Mammary epithelial cell (primary cell): ENCODE measurements at regions of chr11 and their contacts with region 1.

Region 1: DNA sequence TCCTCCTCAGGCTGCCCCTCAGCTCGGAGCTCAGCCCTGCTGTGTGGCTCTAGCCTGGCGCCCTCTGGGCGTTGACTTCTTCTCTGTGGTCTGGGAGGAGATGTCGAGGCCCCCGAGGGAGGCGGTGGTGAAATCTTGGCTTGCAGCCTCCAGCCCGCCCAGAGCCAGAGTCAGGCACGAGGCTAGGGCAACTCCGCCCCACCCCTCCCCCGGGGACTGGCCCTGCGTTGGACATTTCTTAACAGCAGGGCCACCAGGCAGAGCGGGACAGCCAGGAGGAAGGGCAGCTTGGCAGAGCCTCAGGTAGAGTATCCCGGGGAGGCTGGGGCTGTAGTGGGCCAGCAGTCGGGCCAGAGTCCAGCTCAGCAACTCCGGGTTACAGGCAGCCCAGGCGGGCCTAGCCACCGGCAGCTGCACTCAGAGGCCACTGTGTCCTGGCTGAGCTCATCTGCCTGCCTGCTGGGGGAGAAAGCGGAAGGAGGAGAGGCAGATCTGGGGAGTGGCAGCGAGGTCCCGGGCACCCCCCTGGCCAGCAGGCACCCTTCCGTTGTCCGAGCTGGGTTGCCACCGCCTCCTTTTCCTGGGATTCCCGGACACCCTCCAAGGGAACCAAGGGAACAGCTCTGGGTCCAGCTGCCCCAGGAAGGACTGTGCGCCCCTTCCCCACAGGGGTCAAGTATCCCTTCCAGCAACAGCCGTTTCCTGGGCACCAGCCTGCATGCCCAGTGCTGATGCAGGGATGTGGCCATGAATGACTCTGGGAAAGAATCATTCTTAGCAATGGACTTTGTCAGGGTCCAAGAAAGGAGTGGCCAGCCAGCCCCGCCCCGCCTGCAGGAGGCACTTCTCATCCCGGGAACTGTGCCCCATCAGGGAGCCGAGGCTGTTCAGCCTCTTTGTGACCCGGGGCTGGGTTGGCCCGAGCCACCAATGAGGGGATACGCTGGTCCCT is at the start of gene ALDH3B1:
- DNase-seq: peak; percentile 70
- H3K4me3 ChIP-seq: peak within 1 kb of the TSS; percentile 30 to 60 (median 49)
- H3K27ac ChIP-seq: peak within 1 kb of the TSS; percentile 70
- H3K4me1 ChIP-seq: peaks cover 71% of the 10 kb centered on the region
- H3K27me3 ChIP-seq: no peaks in the 10 kb centered on the region
- CTCF ChIP-seq: no peak
- total RNA-seq, gene ALDH3B1: 10.6 to 20.8 TPM

Region 2: DNA sequence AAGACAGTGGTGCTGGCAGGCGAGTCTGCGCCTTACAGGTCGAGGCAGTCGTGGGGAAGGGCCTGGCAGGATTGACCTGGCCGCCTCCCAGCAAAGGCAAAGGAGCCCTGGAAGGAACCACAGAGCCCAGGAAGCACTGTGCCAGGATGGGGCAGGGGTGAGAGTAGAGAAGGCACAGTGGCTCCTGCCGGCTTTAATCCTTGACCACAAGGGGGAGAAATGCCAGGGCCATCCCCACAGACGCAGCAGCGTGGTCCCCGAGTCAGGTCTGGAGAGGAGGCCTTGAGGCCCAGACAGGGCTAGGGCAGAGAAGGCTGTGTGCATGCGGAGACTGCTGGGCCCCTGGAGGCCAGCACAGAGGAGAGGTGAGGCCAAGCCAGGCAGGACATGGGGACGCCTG is 10.2 kb after region 1 on chr11:
- CTCF ChIA-PET with region 1: interaction called, 7 read pairs
- dilution Hi-C with region 1: no loop called
- in situ Hi-C with region 1: no loop called
- intact Hi-C with region 1: loop called (anchors 1 kb)
- DNase-seq: no peak
- H3K4me3 ChIP-seq: no peak overlapping the region
- H3K27ac ChIP-seq: no peak overlapping the region
- H3K4me1 ChIP-seq: peaks cover 12% of the 10 kb centered on the region
- H3K27me3 ChIP-seq: no peaks in the 10 kb centered on the region
- CTCF ChIP-seq: peak; percentile 8 to 41

Region 3: GRCh38 chr11:68121067-68121899 is 110.9 kb after region 1 on chr11 and contains the start of gene CHKA:
- CTCF ChIA-PET with region 1: no interaction called
- dilution Hi-C with region 1: no loop called
- in situ Hi-C with region 1: no loop called
- intact Hi-C with region 1: loop called (anchors 10 kb)
- DNase-seq: peak; percentile 86
- H3K4me3 ChIP-seq: peak within 1 kb of the TSS; percentile 44 to 67 (median 67)
- H3K27ac ChIP-seq: peak within 1 kb of the TSS; percentile 33
- H3K4me1 ChIP-seq: peaks cover 12% of the 10 kb centered on the region
- H3K27me3 ChIP-seq: no peaks in the 10 kb centered on the region
- CTCF ChIP-seq: no peak
- total RNA-seq, gene CHKA: 11.5 to 13.2 TPM

Region 4: DNA sequence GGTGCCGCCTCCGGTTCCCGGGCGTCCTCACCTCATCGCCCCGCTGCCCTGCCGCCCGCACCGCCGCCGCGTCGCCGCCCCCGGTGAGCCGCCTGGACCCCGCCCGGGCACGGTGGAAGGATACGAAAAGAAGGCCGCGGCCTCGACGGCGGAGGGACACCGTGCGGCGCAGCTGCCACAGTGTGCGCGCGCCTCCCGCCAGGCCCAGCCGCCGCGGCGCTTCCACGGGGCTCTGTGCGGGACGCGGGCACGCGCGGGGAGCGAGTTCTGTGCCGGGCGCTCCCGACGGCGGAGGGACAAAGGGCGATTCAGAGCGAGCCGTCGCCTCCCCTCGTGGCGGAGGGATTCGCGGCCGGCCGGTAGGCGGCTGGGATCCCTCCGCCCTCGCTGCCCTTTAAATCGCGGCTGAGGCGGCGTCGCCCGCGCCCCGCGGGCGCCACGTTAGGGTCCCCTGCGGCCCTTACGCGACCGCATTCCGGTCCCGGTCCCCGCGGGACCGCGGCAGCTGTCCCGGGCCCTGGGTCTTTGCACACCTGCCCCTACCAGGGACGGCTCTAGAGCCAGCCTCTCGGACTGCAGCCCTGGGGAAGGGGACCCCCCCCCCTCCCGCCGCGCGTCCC is 203.3 kb after region 1 on chr11:
- CTCF ChIA-PET with region 1: interaction called, 4 read pairs
- dilution Hi-C with region 1: no loop called
- in situ Hi-C with region 1: no loop called
- intact Hi-C with region 1: loop called (anchors 1 kb)
- DNase-seq: peak; percentile 91
- H3K4me3 ChIP-seq: peak overlapping the region; percentile 46 to 66 (median 66)
- H3K27ac ChIP-seq: peak overlapping the region; percentile 52
- H3K4me1 ChIP-seq: peaks cover 39% of the 10 kb centered on the region
- H3K27me3 ChIP-seq: peaks cover 1% of the 10 kb centered on the region
- CTCF ChIP-seq: no peak

Region 5: DNA sequence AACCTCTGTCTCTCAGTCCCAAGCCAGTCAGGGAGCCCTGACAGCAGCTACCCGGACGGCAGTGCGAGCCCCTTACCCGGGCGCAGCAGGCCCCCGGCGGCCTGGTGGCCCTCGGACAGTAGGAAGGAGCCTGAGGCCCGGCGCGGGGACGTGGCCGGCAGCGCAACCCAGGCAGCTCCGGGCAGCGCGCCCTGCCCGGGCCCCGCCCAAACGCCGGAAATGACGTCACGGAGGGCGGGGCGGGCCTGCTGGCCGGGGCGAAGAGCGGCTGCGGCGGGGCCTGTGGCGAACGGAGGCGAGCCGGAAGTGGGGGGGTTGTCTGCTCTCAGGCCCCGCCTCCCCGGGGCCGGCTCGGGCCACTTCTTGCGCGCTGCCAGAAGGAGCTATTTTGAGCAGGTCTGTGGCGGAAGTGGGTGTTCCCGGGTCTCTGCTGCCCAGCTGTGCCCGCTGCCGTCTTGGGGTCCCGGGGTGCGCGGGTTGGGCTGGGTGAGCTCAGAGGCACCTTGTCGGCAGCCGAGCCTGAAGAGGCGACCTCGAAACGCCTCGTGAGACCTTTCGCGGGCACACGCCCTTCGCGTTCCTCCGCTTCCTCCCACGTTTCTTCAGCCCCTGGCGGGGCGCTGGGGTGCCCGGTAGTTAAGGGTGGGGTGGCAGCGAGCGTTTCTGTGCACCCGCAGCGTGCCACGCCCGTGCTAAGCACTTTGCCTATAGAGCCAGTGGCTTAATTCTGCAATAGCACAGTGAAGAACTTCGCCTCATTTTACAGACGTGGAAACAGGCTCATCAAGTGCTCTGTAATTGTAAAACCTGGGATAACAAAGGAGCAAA is 261.6 kb after region 1 on chr11 and contains the start of gene C11orf24:
- CTCF ChIA-PET with region 1: no interaction called
- dilution Hi-C with region 1: no loop called
- in situ Hi-C with region 1: no loop called
- intact Hi-C with region 1: loop called (anchors 10 kb)
- DNase-seq: peak; percentile 94
- H3K4me3 ChIP-seq: peak within 1 kb of the TSS; percentile 71 to 94 (median 73)
- H3K27ac ChIP-seq: peak within 1 kb of the TSS; percentile 84
- H3K4me1 ChIP-seq: peaks cover 35% of the 10 kb centered on the region
- H3K27me3 ChIP-seq: no peaks in the 10 kb centered on the region
- CTCF ChIP-seq: peak in 1 of 2 donors; percentile 1
- total RNA-seq, gene C11orf24: 30.2 to 64.3 TPM